ENCODE measurements at regions of chr1 and their contacts with region 1.

Region 1: DNA sequence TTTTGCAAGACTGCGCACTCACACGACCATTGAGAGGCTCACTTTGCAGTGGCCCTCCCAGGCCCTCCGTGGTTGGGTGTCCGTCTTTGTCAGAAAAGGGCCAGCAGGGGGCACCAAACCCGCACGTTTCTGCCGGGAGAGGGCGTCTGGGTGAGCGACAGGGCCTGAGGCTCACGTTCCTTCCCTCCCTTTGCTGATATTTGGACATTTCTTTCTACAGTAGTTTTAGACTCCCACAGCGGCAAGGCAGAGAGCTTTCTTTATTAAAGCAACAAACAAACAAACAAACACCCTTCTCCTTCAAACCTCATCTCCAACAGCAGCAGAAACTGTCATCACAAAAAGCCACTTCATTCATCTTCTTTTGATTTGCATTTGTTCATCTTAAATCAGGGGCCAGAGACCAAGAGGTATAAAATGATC is 79.2 kb upstream of the WDR26 start:
- DNase-seq: peak; percentile 91
- ATAC-seq: peak; percentile 97
- H3K4me3 Mint-ChIP-seq: no peak overlapping the region
- H3K27ac Mint-ChIP-seq: peak overlapping the region; percentile 37
- H3K4me1 Mint-ChIP-seq: peaks cover 26% of the 10 kb centered on the region
- H3K27me3 Mint-ChIP-seq: no peaks in the 10 kb centered on the region

Region 2: GRCh38 chr1:224503161-224504118 is 10.4 kb before region 1 on chr1:
- CTCF ChIA-PET with region 1: interaction called, 28 read pairs
- DNase-seq: peak; percentile 68
- ATAC-seq: peak; percentile 74
- H3K4me3 Mint-ChIP-seq: no peak overlapping the region
- H3K27ac Mint-ChIP-seq: peak overlapping the region; percentile 76
- H3K4me1 Mint-ChIP-seq: peaks cover 51% of the 10 kb centered on the region
- H3K27me3 Mint-ChIP-seq: no peaks in the 10 kb centered on the region

Region 3: GRCh38 chr1:224615861-224616755 is 102.3 kb after region 1 on chr1 and contains the start of gene CNIH3:
- CTCF ChIA-PET with region 1: interaction called, 10 read pairs
- DNase-seq: peak; percentile 57
- ATAC-seq: peak; percentile 78
- H3K4me3 Mint-ChIP-seq: peak within 1 kb of the TSS; percentile 61
- H3K27ac Mint-ChIP-seq: no peak within 1 kb of the TSS
- H3K4me1 Mint-ChIP-seq: peaks cover 38% of the 10 kb centered on the region
- H3K27me3 Mint-ChIP-seq: peaks cover 61% of the 10 kb centered on the region
- total RNA-seq, gene CNIH3: 1.1 to 3.6 TPM

Region 4: DNA sequence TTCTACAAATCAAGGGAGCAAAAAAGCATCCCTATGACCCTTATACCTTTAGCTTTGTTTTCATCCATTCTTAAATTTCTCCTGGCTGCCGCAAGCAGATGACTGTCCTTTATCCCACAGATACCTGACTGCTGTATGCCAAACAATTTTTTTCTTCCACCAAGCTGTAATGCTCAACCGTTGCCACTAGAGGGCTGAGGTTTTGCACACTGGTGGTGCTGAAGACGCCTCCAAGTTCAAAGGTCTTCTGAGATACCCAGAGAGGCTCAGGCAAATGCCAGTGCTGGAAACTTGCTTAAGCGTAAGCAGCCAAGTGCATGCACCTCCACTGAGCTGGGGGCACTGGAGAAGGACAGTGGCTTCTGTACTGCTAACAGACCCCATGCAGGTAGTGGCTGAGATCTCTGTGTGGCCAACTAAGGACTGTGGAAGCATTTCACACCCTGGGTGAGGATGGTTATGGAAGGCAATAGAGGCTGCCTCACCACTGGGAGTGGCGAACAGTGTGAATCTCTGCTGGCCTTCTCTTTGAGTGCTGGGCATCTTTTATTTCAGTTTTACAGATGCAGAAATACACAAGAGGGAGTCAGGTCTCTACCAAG is 130.9 kb after region 1 on chr1:
- CTCF ChIA-PET with region 1: interaction called, 13 read pairs
- DNase-seq: peak; percentile 70
- ATAC-seq: peak; percentile 79
- H3K4me3 Mint-ChIP-seq: no peak overlapping the region
- H3K27ac Mint-ChIP-seq: no peak overlapping the region
- H3K4me1 Mint-ChIP-seq: peaks cover 7% of the 10 kb centered on the region
- H3K27me3 Mint-ChIP-seq: peaks cover 9% of the 10 kb centered on the region

Region 5: GRCh38 chr1:224922404-224923164 is 408.8 kb after region 1 on chr1:
- CTCF ChIA-PET with region 1: interaction called, 22 read pairs
- DNase-seq: no peak
- ATAC-seq: no peak
- H3K4me3 Mint-ChIP-seq: no peak overlapping the region
- H3K27ac Mint-ChIP-seq: no peak overlapping the region
- H3K4me1 Mint-ChIP-seq: no peaks in the 10 kb centered on the region
- H3K27me3 Mint-ChIP-seq: peaks cover 22% of the 10 kb centered on the region

Measured in activated CD8-positive, alpha-beta memory T cell treated with anti-CD3 and anti-CD28 coated beads, Interleukin-2, amount 10 ng/mL, durations not matched to agents 7 days and 5 days (primary cell).